ENCODE measurements at regions of chr2 and their contacts with region 1.

Region 1: GRCh38 chr2:18560031-18560796 is at the start of gene RDH14:
- DNase-seq: peak; percentile 90 to 94 (median 91)
- H3K4me3 ChIP-seq: peak within 1 kb of the TSS; percentile 11 to 67
- H3K4me3 Mint-ChIP-seq: peak within 1 kb of the TSS; percentile 90 to 98 (median 94)
- H3K27ac ChIP-seq: peak within 1 kb of the TSS; percentile 92
- H3K27ac Mint-ChIP-seq: peak within 1 kb of the TSS; percentile 95 to 98 (median 97)
- H3K4me1 ChIP-seq: peaks cover 29% of the 10 kb centered on the region
- H3K4me1 Mint-ChIP-seq: peaks cover 24 to 48% (median 34%) of the 10 kb centered on the region in 4 donors
- H3K27me3 ChIP-seq: no peaks in the 10 kb centered on the region
- H3K27me3 Mint-ChIP-seq: no peaks in the 10 kb centered on the region
- total RNA-seq, gene RDH14: 18.0 to 19.1 TPM

Region 2: DNA sequence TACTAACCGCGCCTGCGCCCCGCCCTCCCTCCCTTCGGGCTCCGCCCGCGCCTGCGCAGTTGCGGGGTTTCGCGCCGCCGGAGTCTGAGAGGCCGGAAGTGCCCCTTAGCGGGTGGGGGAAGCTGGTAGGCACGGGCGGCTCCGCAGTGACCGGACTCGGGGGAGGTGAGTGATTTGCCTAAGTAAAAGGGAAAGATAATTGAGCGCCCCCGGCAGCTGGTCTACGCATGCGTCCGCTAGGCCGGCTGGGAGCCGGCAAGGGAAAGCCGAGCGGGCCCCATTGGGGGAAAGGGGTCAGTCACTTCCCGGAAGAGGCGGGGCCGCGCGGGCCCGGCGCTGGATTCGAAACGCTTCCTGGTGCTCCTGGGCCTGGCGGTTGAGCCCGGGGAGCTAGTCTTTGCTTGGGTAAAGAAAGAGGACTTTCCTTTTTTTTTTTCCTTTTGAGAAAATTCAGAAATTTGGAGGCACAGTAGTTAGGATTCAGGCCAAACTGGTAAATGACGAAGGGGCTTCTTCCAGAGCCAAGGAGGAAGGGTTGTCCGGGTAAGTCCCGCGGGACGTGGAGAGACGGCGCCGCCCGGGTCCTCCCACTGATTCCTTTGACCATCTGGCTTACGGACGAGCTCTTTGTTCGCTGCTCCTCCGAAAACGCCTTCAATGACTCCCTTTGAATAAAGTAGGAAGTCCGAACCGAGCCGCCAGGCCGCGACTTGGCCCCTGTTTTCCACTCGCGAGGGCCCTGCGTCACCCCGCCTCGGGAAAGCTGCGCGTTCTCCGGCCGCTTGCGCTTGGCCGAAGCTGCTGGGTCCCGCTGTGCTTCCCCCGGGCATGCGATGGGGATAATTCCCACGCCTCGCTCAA is 806.2 kb before region 1 on chr2 and contains the starts of genes GEN1 and SMC6:
- CTCF ChIA-PET with region 1: no interaction called
- POLR2A ChIA-PET with region 1: no interaction called
- intact Hi-C with region 1: loop called (anchors 1 kb)
- DNase-seq: peak; percentile 87 to 96 (median 92)
- H3K4me3 ChIP-seq: peak within 1 kb of the TSS; percentile 86 to 90
- H3K4me3 Mint-ChIP-seq: peak within 1 kb of the TSS; percentile 90 to 97 (median 94)
- H3K27ac ChIP-seq: peak within 1 kb of the TSS; percentile 95
- H3K27ac Mint-ChIP-seq: peak within 1 kb of the TSS; percentile 95 to 99 (median 97)
- H3K4me1 ChIP-seq: peaks cover 31% of the 10 kb centered on the region
- H3K4me1 Mint-ChIP-seq: peaks cover 19 to 34% (median 24%) of the 10 kb centered on the region in 4 donors
- H3K27me3 ChIP-seq: no peaks in the 10 kb centered on the region
- H3K27me3 Mint-ChIP-seq: no peaks in the 10 kb centered on the region
- total RNA-seq, gene GEN1: 6.2 TPM
- total RNA-seq, gene SMC6: 19.1 to 19.2 TPM

Region 3: GRCh38 chr2:18520451-18521425 is 39.5 kb before region 1 on chr2:
- CTCF ChIA-PET with region 1: interaction called, 21 read pairs
- POLR2A ChIA-PET with region 1: interaction called, 4 read pairs
- intact Hi-C with region 1: loop called (anchors 1 kb)
- DNase-seq: peak; percentile 56 to 67 (median 62)
- H3K4me3 ChIP-seq: no peak overlapping the region
- H3K4me3 Mint-ChIP-seq: no peak overlapping the region
- H3K27ac ChIP-seq: no peak overlapping the region
- H3K27ac Mint-ChIP-seq: no peak overlapping the region
- H3K4me1 ChIP-seq: no peaks in the 10 kb centered on the region
- H3K4me1 Mint-ChIP-seq: no peaks in the 10 kb centered on the region
- H3K27me3 ChIP-seq: peaks cover 4% of the 10 kb centered on the region
- H3K27me3 Mint-ChIP-seq: peaks cover 14% of the 10 kb centered on the region in 2 donors

Region 4: DNA sequence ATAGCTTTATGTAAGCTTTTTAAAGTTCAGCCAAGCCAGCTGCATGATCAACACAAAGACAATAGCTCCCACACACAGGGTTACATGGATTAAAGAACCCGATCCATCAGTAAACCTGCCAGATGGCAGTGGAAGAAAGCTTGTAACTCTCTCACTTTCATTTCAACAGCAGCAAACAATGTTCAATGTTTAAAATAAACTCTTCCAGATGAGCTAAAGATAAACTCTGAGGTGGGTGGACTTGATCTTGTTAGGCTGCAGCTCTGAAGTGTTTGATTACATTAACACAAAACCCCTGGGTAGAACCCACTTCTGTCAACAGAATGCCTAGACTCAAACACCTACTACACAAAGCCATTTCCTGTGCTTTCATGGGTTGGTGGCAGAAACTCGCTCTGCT is 13.6 kb before region 1 on chr2:
- CTCF ChIA-PET with region 1: interaction called, 5 read pairs
- POLR2A ChIA-PET with region 1: interaction called, 10 read pairs
- intact Hi-C with region 1: no loop called
- DNase-seq: peak in 4 of 5 donors; percentile 9 to 22 (median 11)
- H3K4me3 ChIP-seq: no peak overlapping the region
- H3K4me3 Mint-ChIP-seq: peak overlapping the region in 6 of 8 donors; percentile 3 to 29 (median 5)
- H3K27ac ChIP-seq: no peak overlapping the region
- H3K27ac Mint-ChIP-seq: peak overlapping the region in 5 of 7 donors; percentile 14 to 74 (median 31)
- H3K4me1 ChIP-seq: peaks cover 11% of the 10 kb centered on the region
- H3K4me1 Mint-ChIP-seq: peaks cover 15 to 35% (median 29%) of the 10 kb centered on the region in 4 donors
- H3K27me3 ChIP-seq: no peaks in the 10 kb centered on the region
- H3K27me3 Mint-ChIP-seq: no peaks in the 10 kb centered on the region

Region 5: DNA sequence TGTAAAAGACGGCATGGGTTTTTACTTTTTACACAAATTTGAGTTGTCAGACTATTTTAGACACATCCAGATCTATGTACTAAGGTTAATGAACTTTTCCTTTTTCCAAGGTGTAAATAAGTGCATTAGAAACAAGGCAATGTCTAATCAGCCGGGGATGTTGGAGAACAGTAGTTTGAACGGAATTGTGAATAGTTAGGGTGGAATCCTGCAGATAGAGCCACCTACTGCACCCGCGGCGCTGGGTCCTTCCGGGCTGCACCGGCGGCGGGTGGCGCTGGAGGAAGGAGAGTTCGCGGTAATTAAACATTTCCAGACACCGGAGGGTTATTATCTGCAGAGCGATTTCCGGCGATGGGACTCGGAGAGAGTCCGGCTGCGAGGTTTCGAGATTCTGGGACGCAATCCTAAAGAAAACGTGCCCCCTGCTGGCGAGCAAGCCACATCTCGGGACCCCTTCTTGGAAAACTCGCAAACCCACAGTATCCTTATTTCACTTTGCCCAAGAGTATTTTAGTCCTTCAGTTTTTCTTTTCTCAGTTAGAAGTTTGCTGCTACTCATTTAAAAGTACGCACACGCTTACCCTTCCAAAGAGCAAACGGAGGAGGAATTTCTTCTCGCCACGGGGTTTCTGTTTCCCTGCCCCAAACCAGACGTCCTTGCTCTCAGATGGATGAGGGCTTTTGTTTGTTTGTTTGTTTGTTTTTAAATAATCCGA is 802.7 kb after region 1 on chr2:
- CTCF ChIA-PET with region 1: no interaction called
- POLR2A ChIA-PET with region 1: no interaction called
- intact Hi-C with region 1: loop called (anchors 1 kb)
- DNase-seq: peak in 3 of 5 donors; percentile 42 to 57 (median 43)
- H3K4me3 ChIP-seq: peak overlapping the region; percentile 77 to 87
- H3K4me3 Mint-ChIP-seq: peak overlapping the region; percentile 89 to 98 (median 96)
- H3K27ac ChIP-seq: peak overlapping the region; percentile 15
- H3K27ac Mint-ChIP-seq: peak overlapping the region; percentile 23 to 93 (median 88)
- H3K4me1 ChIP-seq: peaks cover 35% of the 10 kb centered on the region
- H3K4me1 Mint-ChIP-seq: peaks cover 15 to 51% (median 32%) of the 10 kb centered on the region in 4 donors
- H3K27me3 ChIP-seq: peaks cover 34% of the 10 kb centered on the region
- H3K27me3 Mint-ChIP-seq: peaks cover 23 to 33% of the 10 kb centered on the region in 2 donors

Region 6: GRCh38 chr2:19868705-19869580 is 1308.7 kb after region 1 on chr2:
- CTCF ChIA-PET with region 1: no interaction called
- POLR2A ChIA-PET with region 1: interaction called, 10 read pairs
- intact Hi-C with region 1: loop called (anchors 1 kb)
- DNase-seq: peak; percentile 66 to 71 (median 68)
- H3K4me3 ChIP-seq: peak overlapping the region; percentile 25 to 62
- H3K4me3 Mint-ChIP-seq: peak overlapping the region; percentile 94 to 99 (median 94)
- H3K27ac ChIP-seq: peak overlapping the region; percentile 35
- H3K27ac Mint-ChIP-seq: peak overlapping the region; percentile 87 to 97 (median 96)
- H3K4me1 ChIP-seq: peaks cover 20% of the 10 kb centered on the region
- H3K4me1 Mint-ChIP-seq: peaks cover 14 to 35% (median 27%) of the 10 kb centered on the region in 4 donors
- H3K27me3 ChIP-seq: no peaks in the 10 kb centered on the region
- H3K27me3 Mint-ChIP-seq: no peaks in the 10 kb centered on the region

Region 7: GRCh38 chr2:19901442-19902215 is 1341.4 kb after region 1 on chr2 and contains the start of gene TTC32:
- CTCF ChIA-PET with region 1: interaction called, 3 read pairs
- POLR2A ChIA-PET with region 1: interaction called, 27 read pairs
- intact Hi-C with region 1: loop called (anchors 1 kb)
- DNase-seq: peak; percentile 95 to 98 (median 97)
- H3K4me3 ChIP-seq: peak within 1 kb of the TSS; percentile 59 to 63
- H3K4me3 Mint-ChIP-seq: peak within 1 kb of the TSS; percentile 92 to 99 (median 96)
- H3K27ac ChIP-seq: peak within 1 kb of the TSS; percentile 92
- H3K27ac Mint-ChIP-seq: peak within 1 kb of the TSS; percentile 87 to 100 (median 98)
- H3K4me1 ChIP-seq: peaks cover 37% of the 10 kb centered on the region
- H3K4me1 Mint-ChIP-seq: peaks cover 18 to 45% (median 29%) of the 10 kb centered on the region in 4 donors
- H3K27me3 ChIP-seq: no peaks in the 10 kb centered on the region
- H3K27me3 Mint-ChIP-seq: no peaks in the 10 kb centered on the region
- total RNA-seq, gene TTC32: 44.4 to 48.7 TPM

Measured in CD4-positive, alpha-beta memory T cell (primary cell).